Naive thymus-derived CD8-positive, alpha-beta T cell (primary cell): ENCODE measurements at regions of chr1 and their contacts with region 1.

Region 1: GRCh38 chr1:9689011-9689706 is 37.6 kb downstream of the PIK3CD start:
- DNase-seq: peak; percentile 70 to 96 (median 83)
- ATAC-seq: peak; percentile 67 to 77
- H3K4me3 Mint-ChIP-seq: peak overlapping the region; percentile 79 to 95 (median 86)
- H3K27ac Mint-ChIP-seq: peak overlapping the region; percentile 76 to 92 (median 88)
- H3K4me1 Mint-ChIP-seq: peaks cover 31 to 84% (median 79%) of the 10 kb centered on the region in 4 donors
- H3K27me3 Mint-ChIP-seq: no peaks in the 10 kb centered on the region

Region 2: DNA sequence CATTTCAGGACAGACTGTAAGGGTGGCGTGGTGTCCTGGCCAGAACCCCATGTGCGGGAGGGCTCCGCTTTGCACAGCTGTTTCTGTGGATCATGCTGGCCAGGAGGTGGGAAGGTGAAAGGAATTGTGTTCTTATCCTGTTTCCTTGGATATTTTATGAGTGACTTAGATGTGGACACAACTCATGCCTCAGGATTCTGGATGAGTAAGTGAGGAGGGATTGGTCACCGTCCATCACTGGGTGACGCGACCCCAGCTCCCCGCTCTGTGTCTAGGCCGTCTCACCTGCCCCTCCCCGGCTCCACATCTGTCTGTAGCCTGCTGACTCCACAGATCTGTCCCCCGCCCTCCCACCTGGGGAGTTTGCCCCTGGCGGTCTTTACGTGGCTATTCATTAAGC is 11.2 kb after region 1 on chr1:
- POLR2A ChIA-PET with region 1: interaction called, 18 read pairs
- DNase-seq: peak in 1 of 10 donors; percentile 60
- ATAC-seq: no peak
- H3K4me3 Mint-ChIP-seq: peak overlapping the region in 2 of 10 donors; percentile 3 to 39
- H3K27ac Mint-ChIP-seq: peak overlapping the region in 9 of 10 donors; percentile 71 to 92 (median 85)
- H3K4me1 Mint-ChIP-seq: peaks cover 32 to 81% (median 75%) of the 10 kb centered on the region in 4 donors
- H3K27me3 Mint-ChIP-seq: no peaks in the 10 kb centered on the region

Region 3: GRCh38 chr1:9724706-9725476 is 35.7 kb after region 1 on chr1:
- POLR2A ChIA-PET with region 1: interaction called, 1,258 read pairs
- DNase-seq: peak; percentile 49 to 82 (median 68)
- ATAC-seq: peak; percentile 13 to 16
- H3K4me3 Mint-ChIP-seq: peak overlapping the region in 7 of 10 donors; percentile 10 to 83 (median 53)
- H3K27ac Mint-ChIP-seq: peak overlapping the region; percentile 62 to 92 (median 84)
- H3K4me1 Mint-ChIP-seq: peaks cover 27 to 85% (median 71%) of the 10 kb centered on the region in 4 donors
- H3K27me3 Mint-ChIP-seq: no peaks in the 10 kb centered on the region